ENCODE measurements at regions of chr3 and their contacts with region 1.

Region 1: DNA sequence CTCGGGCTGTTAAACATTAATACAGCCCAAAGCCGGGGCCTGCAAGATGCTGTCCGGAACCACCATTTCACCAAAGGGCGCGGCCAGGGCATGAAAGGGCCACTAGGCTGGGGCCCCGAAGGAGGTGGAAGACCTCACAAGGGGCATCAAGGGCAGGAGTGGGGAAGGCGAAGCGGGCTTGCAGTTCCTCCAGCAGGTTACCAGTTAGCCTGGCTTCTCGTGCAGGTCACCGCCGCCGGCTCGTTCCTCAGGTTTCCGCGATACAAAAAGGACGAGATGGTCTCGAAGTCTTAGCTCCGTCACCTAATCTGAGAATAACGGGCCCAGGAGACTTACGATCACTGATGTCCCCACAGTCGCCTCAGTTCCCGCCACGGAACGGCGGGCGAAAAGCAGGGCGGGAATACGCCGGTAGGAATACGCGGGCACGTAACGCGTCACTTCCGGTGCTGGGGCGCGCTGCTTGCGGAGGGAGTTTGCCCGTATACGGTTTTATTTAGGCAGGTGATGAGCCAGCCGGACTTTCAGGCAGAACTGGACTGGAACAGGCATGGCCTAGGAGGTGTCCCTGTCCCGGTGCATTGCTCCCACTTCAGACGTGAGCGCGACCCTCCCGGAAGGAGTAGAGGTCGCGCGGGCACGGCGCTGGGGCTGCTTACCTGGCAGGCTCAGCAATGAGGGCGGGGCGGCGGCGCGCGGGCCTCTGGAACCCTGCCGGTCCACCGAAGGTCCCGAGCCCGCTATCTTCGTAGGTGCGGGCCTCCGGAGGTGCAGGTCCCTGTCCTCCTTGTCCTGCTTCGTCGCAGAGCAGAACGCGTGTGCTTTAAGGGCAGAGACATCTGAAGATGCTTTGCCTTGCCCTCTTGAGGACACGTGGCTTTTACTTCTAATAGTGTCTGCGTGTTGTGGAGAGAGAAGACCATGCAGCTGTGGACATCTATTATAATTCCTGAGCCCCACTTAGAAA is at the start of gene RFC4:
- DNase-seq: peak; percentile 88
- ATAC-seq: peak; percentile 91
- H3K4me3 ChIP-seq: peak within 1 kb of the TSS; percentile 76
- H3K27ac ChIP-seq: peak within 1 kb of the TSS; percentile 72
- H3K4me1 ChIP-seq: peaks cover 25% of the 10 kb centered on the region
- H3K27me3 ChIP-seq: no peaks in the 10 kb centered on the region
- CTCF ChIP-seq: no peak
- total RNA-seq, gene RFC4: 54.0 and 73.0 TPM in 2 replicates

Region 2: GRCh38 chr3:186790261-186790981 is 16.0 kb before region 1 on chr3:
- CTCF ChIA-PET with region 1: no interaction called
- POLR2A ChIA-PET with region 1: interaction called, 5 read pairs
- intact Hi-C with region 1: loop called (anchors 2 kb)
- DNase-seq: peak; percentile 33
- ATAC-seq: peak; percentile 32
- H3K4me3 ChIP-seq: no peak overlapping the region
- H3K27ac ChIP-seq: no peak overlapping the region
- H3K4me1 ChIP-seq: peaks cover 26% of the 10 kb centered on the region
- H3K27me3 ChIP-seq: no peaks in the 10 kb centered on the region
- CTCF ChIP-seq: no peak

Measured in PC-3 (cell line).